ENCODE measurements at regions of chr15 and their contacts with region 1.

Region 1: GRCh38 chr15:89760303-89761008 is 9.4 kb upstream of the MESP1 start:
- DNase-seq: peak; percentile 85
- H3K4me3 Mint-ChIP-seq: no peak overlapping the region
- H3K27ac Mint-ChIP-seq: no peak overlapping the region
- H3K4me1 Mint-ChIP-seq: no peaks in the 10 kb centered on the region
- H3K27me3 Mint-ChIP-seq: no peaks in the 10 kb centered on the region

Region 2: GRCh38 chr15:89587952-89588351 is 172.5 kb before region 1 on chr15:
- CTCF ChIA-PET with region 1: no interaction called
- intact Hi-C with region 1: no loop called
- DNase-seq: no peak
- H3K4me3 Mint-ChIP-seq: no peak overlapping the region
- H3K27ac Mint-ChIP-seq: no peak overlapping the region
- H3K4me1 Mint-ChIP-seq: no peaks in the 10 kb centered on the region
- H3K27me3 Mint-ChIP-seq: no peaks in the 10 kb centered on the region

Region 3: GRCh38 chr15:89780601-89781000 is 20.1 kb after region 1 on chr15:
- CTCF ChIA-PET with region 1: interaction called, 11 read pairs
- intact Hi-C with region 1: no loop called
- DNase-seq: no peak
- H3K4me3 Mint-ChIP-seq: no peak overlapping the region
- H3K27ac Mint-ChIP-seq: no peak overlapping the region
- H3K4me1 Mint-ChIP-seq: peaks cover 12% of the 10 kb centered on the region
- H3K27me3 Mint-ChIP-seq: peaks cover 16% of the 10 kb centered on the region

Region 4: GRCh38 chr15:89888214-89888804 is 127.9 kb after region 1 on chr15:
- CTCF ChIA-PET with region 1: interaction called, 11 read pairs
- intact Hi-C with region 1: no loop called
- DNase-seq: no peak
- H3K4me3 Mint-ChIP-seq: no peak overlapping the region
- H3K27ac Mint-ChIP-seq: no peak overlapping the region
- H3K4me1 Mint-ChIP-seq: peaks cover 23% of the 10 kb centered on the region
- H3K27me3 Mint-ChIP-seq: no peaks in the 10 kb centered on the region

Region 5: DNA sequence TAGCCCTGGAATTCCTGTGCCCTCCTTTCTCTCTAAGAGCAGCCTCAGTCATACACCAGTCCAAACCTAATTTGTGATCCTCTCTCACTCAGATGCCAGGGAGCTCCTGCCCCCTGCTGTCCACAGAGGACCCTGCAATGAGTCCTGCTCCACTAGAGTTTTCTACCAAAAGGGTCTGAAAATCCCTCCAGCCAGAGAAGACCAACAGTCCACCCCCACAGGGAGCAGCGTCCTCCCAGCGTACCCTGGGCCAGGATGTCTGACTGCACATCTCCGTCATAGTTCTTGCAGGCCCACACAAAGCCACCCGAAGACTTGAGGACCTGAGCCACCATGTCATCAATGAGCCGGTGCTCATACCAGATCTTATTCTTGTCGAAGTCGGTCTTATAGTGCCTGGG is 326.4 kb after region 1 on chr15:
- CTCF ChIA-PET with region 1: interaction called, 7 read pairs
- intact Hi-C with region 1: loop called (anchors 2 kb)
- DNase-seq: peak; percentile 73
- H3K4me3 Mint-ChIP-seq: no peak overlapping the region
- H3K27ac Mint-ChIP-seq: no peak overlapping the region
- H3K4me1 Mint-ChIP-seq: peaks cover 6% of the 10 kb centered on the region
- H3K27me3 Mint-ChIP-seq: no peaks in the 10 kb centered on the region

Region 6: DNA sequence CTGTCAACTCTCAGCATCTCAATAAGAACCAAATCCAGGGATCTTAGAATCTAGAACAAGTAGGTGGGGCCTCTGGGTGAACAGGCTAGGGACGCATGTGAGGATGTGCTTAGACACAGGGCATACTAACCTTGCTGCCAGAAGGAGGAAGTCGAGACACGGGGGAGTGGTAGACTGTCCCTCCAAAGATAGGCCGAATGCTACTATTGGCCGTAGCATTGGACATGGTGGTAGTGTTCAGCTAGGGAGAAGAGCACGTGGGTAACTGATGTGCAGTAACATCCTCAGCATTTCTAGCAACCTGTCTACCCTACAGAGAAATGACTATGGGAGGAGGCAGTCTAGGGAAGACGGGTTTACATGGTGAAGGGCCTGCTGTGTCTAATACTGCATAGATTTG is 1209.8 kb after region 1 on chr15:
- CTCF ChIA-PET with region 1: no interaction called
- intact Hi-C with region 1: no loop called
- DNase-seq: no peak
- H3K4me3 Mint-ChIP-seq: no peak overlapping the region
- H3K27ac Mint-ChIP-seq: no peak overlapping the region
- H3K4me1 Mint-ChIP-seq: peaks cover under 1% of the 10 kb centered on the region
- H3K27me3 Mint-ChIP-seq: no peaks in the 10 kb centered on the region

Measured in activated naive CD4-positive, alpha-beta T cell treated with anti-CD3 and anti-CD28 coated beads for 36 hours (primary cell).